ENCODE measurements at regions of chr16 and their contacts with region 1.

Region 1: GRCh38 chr16:11715246-11715947 is 27.3 kb downstream of the TXNDC11 start:
- H3K4me3 ChIP-seq: no peak overlapping the region
- H3K27ac ChIP-seq: no peak overlapping the region
- H3K4me1 ChIP-seq: no peaks in the 10 kb centered on the region
- CTCF ChIP-seq: no peak

Region 2: DNA sequence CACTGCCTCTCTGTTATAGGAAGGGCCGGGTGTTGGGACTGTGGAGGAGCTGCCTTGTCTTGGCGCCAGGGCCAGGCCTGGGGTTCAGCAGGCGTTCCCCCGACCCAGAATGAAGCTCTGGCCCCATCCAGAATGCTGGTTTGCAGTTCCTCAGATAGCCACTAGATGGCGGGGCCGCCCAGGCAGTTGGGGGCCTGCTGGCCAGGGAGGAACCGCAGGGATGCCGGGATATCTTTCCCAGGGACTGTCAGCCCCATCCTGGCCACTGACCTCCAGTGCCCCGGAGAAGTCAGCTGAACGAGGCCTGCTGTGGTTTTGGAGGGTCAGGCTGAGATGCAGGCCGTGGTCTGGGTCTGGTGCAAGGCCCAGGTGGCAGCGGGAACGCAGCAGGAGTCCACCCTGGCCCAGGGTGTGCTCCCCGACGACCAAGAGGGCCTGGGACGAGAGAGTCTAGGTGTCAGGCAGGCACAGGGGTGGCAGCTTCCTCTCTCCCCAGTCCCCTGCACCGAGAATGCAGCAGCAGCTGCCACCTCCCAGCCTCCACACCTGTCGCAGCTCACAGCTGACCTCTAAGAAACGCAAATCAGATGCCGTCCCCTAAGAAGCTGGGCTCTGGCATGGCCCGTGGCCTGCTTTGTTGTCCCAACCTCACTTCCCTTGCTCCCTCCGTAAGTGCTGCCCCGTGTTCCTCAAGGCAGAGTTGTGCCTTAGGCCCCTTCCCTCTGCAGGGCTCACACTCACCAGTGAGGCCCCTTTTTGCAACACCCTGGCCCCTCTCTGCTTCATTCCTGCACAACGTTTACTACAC is 319.0 kb before region 1 on chr16:
- CTCF ChIA-PET with region 1: interaction called, 26 read pairs
- POLR2A ChIA-PET with region 1: no interaction called
- H3K4me3 ChIP-seq: no peak overlapping the region
- H3K27ac ChIP-seq: no peak overlapping the region
- H3K4me1 ChIP-seq: no peaks in the 10 kb centered on the region
- CTCF ChIP-seq: peak; percentile 93

Region 3: GRCh38 chr16:11530171-11530940 is 185.0 kb before region 1 on chr16:
- CTCF ChIA-PET with region 1: interaction called, 31 read pairs
- POLR2A ChIA-PET with region 1: no interaction called
- H3K4me3 ChIP-seq: no peak overlapping the region
- H3K27ac ChIP-seq: no peak overlapping the region
- H3K4me1 ChIP-seq: no peaks in the 10 kb centered on the region
- CTCF ChIP-seq: no peak

Region 4: DNA sequence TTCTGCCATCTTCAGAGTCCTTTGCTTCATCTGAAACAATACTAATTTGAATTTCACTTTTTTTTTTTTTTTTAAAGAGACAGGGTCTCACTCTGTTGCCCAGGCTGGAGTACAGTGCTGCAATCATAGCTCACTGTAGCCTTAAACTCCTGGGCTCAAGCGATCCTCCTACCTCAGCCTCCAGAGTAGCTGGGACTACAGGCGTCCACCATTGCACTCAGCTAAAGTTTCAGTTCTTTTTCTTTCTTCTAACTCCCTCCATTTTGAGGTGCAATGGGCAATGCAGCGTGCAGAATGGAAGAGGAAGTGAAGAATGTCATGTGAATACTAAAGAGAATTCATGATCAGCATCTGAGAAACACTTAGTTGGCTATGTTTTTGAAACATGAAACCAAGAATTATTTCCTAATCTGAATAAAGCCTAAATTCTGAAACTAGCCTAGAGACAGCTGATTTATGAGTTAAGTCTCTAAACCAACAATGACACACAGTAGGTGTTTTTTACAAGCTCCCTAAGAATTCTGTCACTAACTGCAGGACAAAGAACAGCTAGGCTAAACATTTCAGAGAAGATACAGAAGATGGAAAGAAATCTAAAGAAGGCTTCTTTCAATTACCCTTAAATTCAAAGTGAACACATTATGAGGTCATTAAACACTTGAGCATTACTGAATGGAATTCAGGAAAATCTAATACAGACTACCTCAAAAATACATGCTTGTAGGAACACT is 26.2 kb before region 1 on chr16:
- CTCF ChIA-PET with region 1: interaction called, 15 read pairs
- POLR2A ChIA-PET with region 1: no interaction called
- H3K4me3 ChIP-seq: no peak overlapping the region
- H3K27ac ChIP-seq: no peak overlapping the region
- H3K4me1 ChIP-seq: peaks cover 10% of the 10 kb centered on the region
- CTCF ChIP-seq: no peak

Region 5: DNA sequence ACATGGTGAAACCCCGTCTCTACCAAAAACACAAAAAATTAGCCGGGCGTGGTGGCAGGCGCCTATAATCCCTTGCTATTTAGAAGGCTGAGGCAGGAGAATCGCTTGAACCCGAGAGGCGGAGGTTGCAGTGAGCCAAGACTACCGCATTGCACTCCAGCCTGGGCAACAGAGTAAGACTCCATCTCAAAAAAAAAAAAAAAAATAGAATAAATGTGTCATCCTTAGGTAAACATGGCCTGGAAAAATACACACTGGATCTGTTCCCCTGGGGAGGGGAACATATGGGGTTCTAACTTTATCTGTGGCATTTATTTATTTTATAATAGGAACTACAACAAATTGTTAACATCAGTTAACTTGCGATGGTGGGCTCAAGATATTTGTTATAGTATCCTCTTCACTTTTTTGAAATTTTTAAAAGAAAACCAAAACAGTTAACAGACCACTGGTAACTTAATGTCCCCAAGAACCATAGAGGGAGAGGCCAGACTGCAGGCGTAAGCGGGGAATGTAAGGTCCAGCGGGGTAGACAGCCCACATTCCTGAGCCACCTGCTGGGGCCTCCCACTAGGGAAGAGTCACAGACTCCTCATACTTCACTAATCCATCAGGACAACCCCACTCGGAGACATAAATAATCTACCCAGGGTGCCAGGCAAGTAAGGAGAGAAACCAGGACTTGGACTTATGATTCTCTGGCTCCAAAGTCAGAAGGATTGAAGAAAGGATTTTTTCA is 39.8 kb after region 1 on chr16:
- CTCF ChIA-PET with region 1: no interaction called
- POLR2A ChIA-PET with region 1: no interaction called
- H3K4me3 ChIP-seq: no peak overlapping the region
- H3K27ac ChIP-seq: no peak overlapping the region
- H3K4me1 ChIP-seq: peaks cover 14% of the 10 kb centered on the region
- CTCF ChIP-seq: no peak

Measured in HEK293 (cell line).